ENCODE measurements at regions of chr4 and their contacts with region 1.

Region 1: DNA sequence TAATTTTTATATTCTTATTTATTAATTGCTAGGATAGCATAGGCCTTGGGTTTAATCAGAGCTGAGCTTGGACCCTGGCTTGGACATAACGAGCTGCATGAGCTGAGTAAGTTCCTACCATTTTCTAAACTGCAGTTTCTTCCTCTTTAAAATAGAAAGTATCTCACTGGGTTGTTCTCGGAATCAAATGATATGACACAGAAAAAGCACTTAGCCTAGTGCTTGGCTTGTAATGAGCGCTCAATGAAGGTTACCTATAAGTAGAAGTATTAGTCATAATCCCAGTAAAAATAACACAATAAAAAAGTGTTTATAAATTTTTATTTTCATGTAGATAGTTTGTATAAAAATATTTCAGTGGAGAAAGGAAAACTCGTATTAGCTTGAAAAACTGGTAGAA is 113.3 kb upstream of the PDLIM3 start:
- DNase-seq: no peak

Region 2: GRCh38 chr4:186029571-186030398 is 381.2 kb after region 1 on chr4:
- intact Hi-C with region 1: loop called in 1 of 2 experiments (anchors 5 kb)
- DNase-seq: peak; percentile 90